SK-N-SH (cell line): ENCODE measurements at regions of chr4 and their contacts with region 1.

Region 1: DNA sequence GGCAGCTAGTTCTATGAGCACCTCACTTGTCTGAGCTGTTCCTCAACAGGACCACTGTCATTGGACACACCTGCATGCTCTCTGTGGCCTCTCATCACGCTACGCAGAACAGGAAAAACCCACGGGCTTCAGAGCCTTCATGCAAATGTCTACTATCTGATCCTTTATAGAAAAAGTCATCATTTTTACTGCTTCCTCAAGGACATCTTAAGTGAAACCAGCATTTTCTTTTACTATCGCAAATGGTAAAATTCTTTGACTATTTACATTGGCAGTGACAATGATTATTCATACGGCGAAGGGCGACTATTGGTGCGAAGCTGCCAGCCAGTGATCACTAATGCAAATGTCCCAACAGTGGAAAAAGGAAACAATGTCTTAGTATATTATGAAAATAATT is 147.0 kb downstream of the AFAP1 start:
- DNase-seq: no peak
- H3K4me3 ChIP-seq: no peak overlapping the region
- H3K27ac ChIP-seq: peak overlapping the region in 1 of 2 experiments; percentile 53; a peak in 1 of 4 replicates
- H3K4me1 ChIP-seq: peaks cover 11 to 14% of the 10 kb centered on the region in 2 experiments; a peak in 3 of 4 replicates
- H3K27me3 ChIP-seq: no peaks in the 10 kb centered on the region
- CTCF ChIP-seq: no peak
- EP300 ChIP-seq: no peak
- RAD21 ChIP-seq: no peak

Region 2: DNA sequence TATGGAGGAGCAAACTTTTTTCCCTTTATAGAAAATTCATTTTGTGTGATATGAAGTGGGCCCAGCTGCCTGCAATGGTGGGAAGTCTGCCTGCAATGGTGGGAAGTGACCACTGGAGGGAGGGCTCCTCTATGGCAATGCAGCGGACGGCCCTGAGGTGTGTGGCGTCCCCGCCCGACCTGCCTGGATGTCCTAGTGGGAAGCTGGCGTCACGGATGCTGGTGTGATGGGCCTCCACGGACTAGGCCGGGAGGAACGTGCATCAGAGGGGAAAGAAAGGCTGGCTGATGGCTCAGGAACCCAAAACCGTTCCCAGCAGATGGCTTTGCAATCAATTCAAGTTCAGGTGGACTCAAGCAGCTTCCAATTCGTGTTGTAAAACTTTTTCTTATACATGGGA is 30.9 kb before region 1 on chr4:
- CTCF ChIA-PET with region 1: interaction called, 31 read pairs
- POLR2A ChIA-PET with region 1: no interaction called
- DNase-seq: peak; percentile 91
- H3K4me3 ChIP-seq: no peak overlapping the region; a peak in 1 of 4 replicates
- H3K27ac ChIP-seq: no peak overlapping the region; a peak in 1 of 4 replicates
- H3K4me1 ChIP-seq: peaks cover 0 to 4% of the 10 kb centered on the region in 2 experiments; a peak in 1 of 4 replicates
- H3K27me3 ChIP-seq: no peaks in the 10 kb centered on the region
- CTCF ChIP-seq: peak; percentile 72
- EP300 ChIP-seq: no peak
- RAD21 ChIP-seq: peak; percentile 73

Region 3: DNA sequence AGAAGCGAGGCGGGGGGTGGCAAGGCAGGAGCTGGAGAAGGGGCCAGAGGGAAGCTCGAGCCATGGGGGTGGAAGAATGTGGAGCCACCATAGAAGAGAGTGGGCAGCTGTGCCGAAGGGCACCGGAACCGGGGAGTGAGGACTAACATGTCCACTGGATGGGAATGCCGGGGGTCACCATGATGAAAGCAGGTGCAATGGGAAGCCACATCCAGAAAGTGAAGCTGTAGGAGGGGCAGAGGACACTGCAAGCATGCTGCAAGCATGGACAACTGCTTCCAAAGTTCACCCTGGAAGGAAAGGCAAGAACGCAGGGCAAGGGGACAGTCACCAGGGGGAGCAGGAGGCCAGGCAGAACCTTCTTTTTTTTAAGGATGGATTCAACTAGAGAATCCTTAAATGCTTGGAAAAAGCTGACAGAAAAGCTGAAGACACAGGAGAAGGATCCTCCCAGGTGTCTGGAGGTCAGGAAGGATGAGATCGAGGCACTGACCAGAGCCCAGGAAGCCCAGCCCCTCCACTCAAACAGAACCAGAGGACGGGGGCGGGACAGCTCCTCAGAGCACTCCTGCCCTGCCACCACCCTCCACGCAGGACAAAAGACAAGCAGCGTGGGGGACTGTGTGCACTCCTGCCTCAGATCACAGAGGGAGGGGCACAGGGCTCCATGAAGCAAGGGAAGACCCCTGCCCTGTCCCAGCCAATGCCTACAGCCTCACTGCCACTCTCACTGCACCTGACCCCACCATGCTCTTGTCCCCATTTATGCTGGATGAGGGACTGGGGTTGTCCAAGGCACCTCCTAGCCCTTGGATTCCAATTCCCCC is 22.2 kb before region 1 on chr4:
- CTCF ChIA-PET with region 1: interaction called, 15 read pairs
- POLR2A ChIA-PET with region 1: no interaction called
- DNase-seq: peak; percentile 73
- H3K4me3 ChIP-seq: no peak overlapping the region
- H3K27ac ChIP-seq: peak overlapping the region in 1 of 2 experiments; percentile 25; a peak in 1 of 4 replicates
- H3K4me1 ChIP-seq: peaks cover 0 to 27% of the 10 kb centered on the region in 2 experiments; a peak in 1 of 4 replicates
- H3K27me3 ChIP-seq: no peaks in the 10 kb centered on the region
- CTCF ChIP-seq: peak; percentile 63
- EP300 ChIP-seq: no peak
- RAD21 ChIP-seq: peak; percentile 69